Endothelial cell of umbilical vein (primary cell): ENCODE measurements at regions of chr13 and their contacts with region 1.

Region 1: GRCh38 chr13:97921176-97921816 is 32.2 kb upstream of the IPO5 start:
- DNase-seq: no peak
- H3K4me3 ChIP-seq: no peak overlapping the region
- H3K27ac ChIP-seq: no peak overlapping the region
- H3K4me1 ChIP-seq: no peaks in the 10 kb centered on the region
- H3K27me3 ChIP-seq: no peaks in the 10 kb centered on the region
- CTCF ChIP-seq: no peak
- POLR2A ChIP-seq: no peak

Region 2: DNA sequence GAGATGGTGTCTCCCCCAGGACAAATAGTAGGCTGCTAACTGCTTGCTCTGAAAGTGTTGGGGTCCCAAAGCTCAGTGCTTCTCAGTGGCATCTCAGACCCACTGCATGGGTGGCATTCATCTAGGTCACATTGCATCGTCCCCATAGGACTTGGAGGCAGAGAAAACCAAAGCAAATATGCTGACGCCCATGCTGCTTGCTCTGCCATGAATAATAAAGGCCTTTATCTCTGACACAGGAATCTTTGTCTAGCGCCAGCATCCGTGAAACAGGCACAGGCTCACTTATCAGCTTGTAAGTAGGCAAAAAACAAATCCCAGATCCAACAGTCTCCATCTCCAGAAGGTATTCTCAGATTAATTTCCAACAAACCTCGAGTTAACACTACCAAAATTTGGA is 13.3 kb after region 1 on chr13:
- CTCF ChIA-PET with region 1: no interaction called
- POLR2A ChIA-PET with region 1: no interaction called
- dilution Hi-C with region 1: no loop called
- intact Hi-C with region 1: no loop called
- DNase-seq: peak; percentile 14
- H3K4me3 ChIP-seq: no peak overlapping the region
- H3K27ac ChIP-seq: no peak overlapping the region
- H3K4me1 ChIP-seq: no peaks in the 10 kb centered on the region
- H3K27me3 ChIP-seq: peaks cover 0 to 2% of the 10 kb centered on the region in 2 experiments
- CTCF ChIP-seq: no peak
- POLR2A ChIP-seq: no peak

Region 3: GRCh38 chr13:97975848-97976609 is 54.7 kb after region 1 on chr13:
- CTCF ChIA-PET with region 1: no interaction called
- POLR2A ChIA-PET with region 1: no interaction called
- dilution Hi-C with region 1: no loop called
- intact Hi-C with region 1: loop called (anchors 5 kb)
- DNase-seq: peak; percentile 85
- H3K4me3 ChIP-seq: peak overlapping the region; percentile 53 to 91 (median 66)
- H3K27ac ChIP-seq: peak overlapping the region; percentile 74
- H3K4me1 ChIP-seq: peaks cover 26% of the 10 kb centered on the region
- H3K27me3 ChIP-seq: no peaks in the 10 kb centered on the region
- CTCF ChIP-seq: no peak
- POLR2A ChIP-seq: peak; percentile 90